GM23248 (cell line): ENCODE measurements at regions of chr16 and their contacts with region 1.

Region 1: DNA sequence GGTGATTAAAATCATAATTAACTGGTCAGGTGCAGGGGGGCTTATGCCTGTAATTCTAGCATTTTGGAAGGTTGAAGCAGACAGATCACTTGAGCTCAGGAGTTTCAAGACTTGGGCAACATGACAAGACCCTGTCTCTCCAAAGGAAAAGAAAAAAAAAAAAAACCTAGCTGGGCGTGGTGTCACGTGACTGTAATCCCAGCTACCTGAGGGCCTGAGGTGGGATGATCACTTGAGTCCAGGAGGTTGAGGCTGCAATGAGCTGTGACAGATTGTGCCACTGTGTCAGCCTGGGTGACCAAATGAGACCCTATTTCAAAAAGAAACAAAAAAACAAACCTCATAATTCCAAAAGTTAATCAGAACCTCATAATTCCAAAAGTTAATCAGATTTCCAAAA is 505.5 kb downstream of the CDH8 start:
- DNase-seq: no peak
- H3K4me3 ChIP-seq: no peak overlapping the region
- H3K27ac ChIP-seq: no peak overlapping the region
- H3K4me1 ChIP-seq: no peaks in the 10 kb centered on the region
- H3K27me3 ChIP-seq: no peaks in the 10 kb centered on the region

Region 2: DNA sequence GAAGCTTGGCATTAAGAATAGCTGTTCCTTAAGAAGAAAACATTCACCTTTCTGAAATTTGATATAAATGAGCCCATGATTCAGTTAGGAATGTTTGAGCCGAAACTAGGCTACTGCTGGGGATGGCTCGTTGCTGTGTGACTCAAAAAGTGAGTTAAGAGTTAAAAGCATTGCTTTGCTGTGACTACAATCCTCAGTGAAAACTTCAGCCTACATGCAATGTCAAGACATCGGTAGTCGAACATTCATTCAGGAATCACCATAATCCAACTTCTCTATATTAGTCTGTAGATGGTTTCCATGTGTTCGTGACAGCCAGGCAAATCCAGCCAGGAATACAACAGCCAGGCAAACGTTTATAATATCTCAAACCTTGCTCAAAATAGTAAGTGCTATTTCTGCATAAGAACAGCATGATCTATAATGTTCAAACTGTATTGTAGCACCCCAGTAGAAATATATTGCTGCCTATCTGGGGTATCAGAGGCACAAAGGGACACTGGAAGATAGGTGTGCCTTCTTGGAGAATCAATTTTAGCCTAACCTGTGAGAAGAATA is 719.6 kb before region 1 on chr16:
- in situ Hi-C with region 1: no loop called
- DNase-seq: no peak
- H3K4me3 ChIP-seq: no peak overlapping the region
- H3K27ac ChIP-seq: no peak overlapping the region
- H3K4me1 ChIP-seq: no peaks in the 10 kb centered on the region
- H3K27me3 ChIP-seq: no peaks in the 10 kb centered on the region

Region 3: DNA sequence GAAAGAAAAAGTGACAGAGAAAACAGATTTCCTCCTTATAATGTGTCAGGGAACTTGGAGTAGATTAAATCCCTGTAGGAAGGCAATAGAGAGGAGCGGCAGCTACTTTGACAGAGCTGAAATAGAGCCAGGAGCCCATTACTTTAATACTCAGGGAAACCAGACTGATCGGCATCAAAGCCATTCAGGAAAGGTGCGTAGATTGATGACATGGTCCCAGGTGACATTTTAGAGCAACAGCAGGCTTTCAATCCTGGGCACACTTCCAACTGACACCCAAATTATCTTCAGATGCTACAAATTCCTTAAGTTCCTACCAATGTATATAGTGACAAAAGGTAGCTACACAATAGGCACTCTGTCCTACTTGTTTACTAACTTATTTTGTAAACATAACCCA is 315.9 kb before region 1 on chr16:
- in situ Hi-C with region 1: no loop called
- DNase-seq: no peak
- H3K4me3 ChIP-seq: no peak overlapping the region
- H3K27ac ChIP-seq: no peak overlapping the region
- H3K4me1 ChIP-seq: no peaks in the 10 kb centered on the region
- H3K27me3 ChIP-seq: no peaks in the 10 kb centered on the region

Region 4: GRCh38 chr16:61471737-61472136 is 59.0 kb before region 1 on chr16:
- in situ Hi-C with region 1: loop called (anchors 10 kb)
- DNase-seq: no peak
- H3K4me3 ChIP-seq: no peak overlapping the region
- H3K27ac ChIP-seq: no peak overlapping the region
- H3K4me1 ChIP-seq: no peaks in the 10 kb centered on the region
- H3K27me3 ChIP-seq: no peaks in the 10 kb centered on the region

Region 5: DNA sequence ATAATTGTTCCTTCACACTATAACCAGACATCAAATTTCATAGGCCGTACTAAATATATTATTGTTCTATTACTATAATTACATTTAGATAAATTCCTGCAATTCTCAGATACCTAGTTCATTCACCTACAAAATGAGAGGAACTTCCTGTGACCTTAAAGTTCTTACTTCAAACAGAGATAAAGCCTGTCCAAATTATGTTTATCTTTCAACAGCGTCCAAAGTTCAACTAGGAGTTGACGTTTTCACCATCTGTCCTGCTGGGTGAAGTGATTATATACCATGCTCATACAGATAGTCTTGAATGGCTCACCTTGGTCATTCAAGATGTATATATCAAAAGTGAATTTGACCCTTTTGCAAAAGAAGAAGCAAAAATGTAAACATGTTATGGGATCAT is 64.9 kb after region 1 on chr16:
- in situ Hi-C with region 1: no loop called
- DNase-seq: no peak
- H3K4me3 ChIP-seq: no peak overlapping the region
- H3K27ac ChIP-seq: no peak overlapping the region
- H3K4me1 ChIP-seq: no peaks in the 10 kb centered on the region
- H3K27me3 ChIP-seq: no peaks in the 10 kb centered on the region